Activated CD4-positive, alpha-beta T cell treated with anti-CD3 and anti-CD28 coated beads, Interleukin-2, amount 10 ng/mL, durations not matched to agents 24 days and 14 days (primary cell): ENCODE measurements at regions of chr14 and their contacts with region 1.

Region 1: GRCh38 chr14:106185837-106186233 is 659.5 kb downstream of the TMEM121 start:
- DNase-seq: peak; percentile 90
- H3K4me3 Mint-ChIP-seq: peak overlapping the region; percentile 9
- H3K27ac Mint-ChIP-seq: no peak overlapping the region
- H3K4me1 Mint-ChIP-seq: peaks cover 30% of the 10 kb centered on the region
- H3K27me3 Mint-ChIP-seq: peaks cover 64% of the 10 kb centered on the region

Region 2: DNA sequence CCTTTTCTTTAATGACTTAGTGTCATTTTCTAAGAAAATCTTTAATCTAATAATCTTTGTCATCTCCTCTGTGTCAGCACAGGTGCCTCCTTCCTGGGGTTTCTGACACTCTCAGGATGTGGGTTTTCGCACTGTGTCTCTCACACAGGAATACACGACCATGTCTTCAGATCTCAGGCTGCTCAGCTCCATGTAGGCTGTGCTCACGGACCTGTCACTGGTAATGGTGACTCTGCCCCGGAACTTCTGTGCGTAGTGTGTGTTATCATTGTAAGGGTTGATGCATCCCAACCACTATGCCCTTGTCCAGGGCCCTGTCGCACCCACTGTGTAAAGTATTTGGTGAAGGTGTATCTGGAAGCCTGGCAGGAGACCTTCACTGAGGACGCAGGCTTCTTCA is 11.6 kb before region 1 on chr14:
- intact Hi-C with region 1: loop called (anchors 1 kb)
- DNase-seq: peak; percentile 87
- H3K4me3 Mint-ChIP-seq: peak overlapping the region; percentile 44
- H3K27ac Mint-ChIP-seq: peak overlapping the region; percentile 22
- H3K4me1 Mint-ChIP-seq: peaks cover 43% of the 10 kb centered on the region
- H3K27me3 Mint-ChIP-seq: peaks cover 28% of the 10 kb centered on the region

Region 3: GRCh38 chr14:106248321-106249192 is 62.7 kb after region 1 on chr14:
- intact Hi-C with region 1: no loop called
- DNase-seq: no peak
- H3K4me3 Mint-ChIP-seq: no peak overlapping the region
- H3K27ac Mint-ChIP-seq: no peak overlapping the region
- H3K4me1 Mint-ChIP-seq: peaks cover 4% of the 10 kb centered on the region
- H3K27me3 Mint-ChIP-seq: peaks cover 43% of the 10 kb centered on the region

Region 4: GRCh38 chr14:106436310-106436905 is 250.6 kb after region 1 on chr14:
- intact Hi-C with region 1: no loop called
- DNase-seq: peak; percentile 86
- H3K4me3 Mint-ChIP-seq: no peak overlapping the region
- H3K27ac Mint-ChIP-seq: no peak overlapping the region
- H3K4me1 Mint-ChIP-seq: no peaks in the 10 kb centered on the region
- H3K27me3 Mint-ChIP-seq: peaks cover 40% of the 10 kb centered on the region